ENCODE measurements at regions of chr2 and their contacts with region 1.

Region 1: GRCh38 chr2:38181806-38182491 is 106.0 kb upstream of the CYP1B1 start:
- DNase-seq: no peak
- H3K4me3 ChIP-seq: no peak overlapping the region
- H3K27ac ChIP-seq: no peak overlapping the region
- H3K4me1 ChIP-seq: peaks cover 20% of the 10 kb centered on the region
- H3K27me3 ChIP-seq: no peaks in the 10 kb centered on the region
- CTCF ChIP-seq: no peak

Region 2: GRCh38 chr2:37389989-37390765 is 791.8 kb before region 1 on chr2:
- CTCF ChIA-PET with region 1: no interaction called
- dilution Hi-C with region 1: no loop called
- in situ Hi-C with region 1: no loop called
- intact Hi-C with region 1: no loop called
- DNase-seq: peak; percentile 98
- H3K4me3 ChIP-seq: no peak overlapping the region
- H3K27ac ChIP-seq: peak overlapping the region; percentile 85
- H3K4me1 ChIP-seq: peaks cover 43% of the 10 kb centered on the region
- H3K27me3 ChIP-seq: no peaks in the 10 kb centered on the region
- CTCF ChIP-seq: no peak

Region 3: DNA sequence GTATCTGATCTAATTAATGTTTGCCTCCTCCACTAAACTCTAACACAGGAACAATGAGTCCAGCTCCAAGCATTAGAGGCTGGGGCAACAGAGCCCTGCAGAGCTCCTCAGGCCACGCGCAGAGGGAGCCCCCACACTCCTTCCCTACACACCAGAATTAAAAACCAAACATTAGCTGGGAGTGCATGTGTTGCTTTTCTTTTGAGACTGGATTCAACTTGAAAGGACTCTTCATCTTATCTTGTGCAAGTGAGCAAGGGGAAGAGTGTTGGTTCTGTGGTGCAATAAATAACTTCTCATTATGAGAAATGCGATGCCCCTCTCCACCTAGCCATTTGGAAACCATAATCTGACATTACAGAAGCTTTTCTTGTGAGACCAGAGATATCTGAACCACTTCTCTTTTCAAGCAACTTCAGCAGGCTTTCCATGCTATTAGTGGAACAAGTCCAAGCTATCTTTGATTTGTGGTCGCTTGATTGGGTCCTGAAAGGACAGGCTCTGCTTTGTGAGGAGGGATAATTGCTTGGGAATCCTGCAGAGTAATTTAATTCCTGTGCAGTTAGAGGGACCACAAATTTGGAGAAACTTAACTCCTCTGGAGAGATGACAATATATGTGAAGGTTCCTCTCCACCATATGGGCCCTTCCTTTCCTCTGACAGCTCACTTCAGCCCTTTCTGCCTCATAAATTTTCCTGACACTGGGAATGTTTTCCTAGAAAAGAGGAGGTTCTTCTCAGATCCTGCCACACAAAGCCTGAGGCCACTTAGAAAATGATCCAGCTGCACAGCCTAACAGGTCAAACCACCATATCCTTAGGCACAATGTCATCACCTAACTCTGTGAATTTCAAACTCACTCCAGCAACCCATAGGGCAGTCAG is 82.7 kb after region 1 on chr2:
- CTCF ChIA-PET with region 1: no interaction called
- dilution Hi-C with region 1: loop called (anchors 5 kb)
- in situ Hi-C with region 1: no loop called
- intact Hi-C with region 1: no loop called
- DNase-seq: no peak
- H3K4me3 ChIP-seq: no peak overlapping the region
- H3K27ac ChIP-seq: no peak overlapping the region
- H3K4me1 ChIP-seq: no peaks in the 10 kb centered on the region
- H3K27me3 ChIP-seq: no peaks in the 10 kb centered on the region
- CTCF ChIP-seq: no peak

Measured in mammary epithelial cell (primary cell).